ENCODE measurements at regions of chr9 and their contacts with region 1.

Region 1: DNA sequence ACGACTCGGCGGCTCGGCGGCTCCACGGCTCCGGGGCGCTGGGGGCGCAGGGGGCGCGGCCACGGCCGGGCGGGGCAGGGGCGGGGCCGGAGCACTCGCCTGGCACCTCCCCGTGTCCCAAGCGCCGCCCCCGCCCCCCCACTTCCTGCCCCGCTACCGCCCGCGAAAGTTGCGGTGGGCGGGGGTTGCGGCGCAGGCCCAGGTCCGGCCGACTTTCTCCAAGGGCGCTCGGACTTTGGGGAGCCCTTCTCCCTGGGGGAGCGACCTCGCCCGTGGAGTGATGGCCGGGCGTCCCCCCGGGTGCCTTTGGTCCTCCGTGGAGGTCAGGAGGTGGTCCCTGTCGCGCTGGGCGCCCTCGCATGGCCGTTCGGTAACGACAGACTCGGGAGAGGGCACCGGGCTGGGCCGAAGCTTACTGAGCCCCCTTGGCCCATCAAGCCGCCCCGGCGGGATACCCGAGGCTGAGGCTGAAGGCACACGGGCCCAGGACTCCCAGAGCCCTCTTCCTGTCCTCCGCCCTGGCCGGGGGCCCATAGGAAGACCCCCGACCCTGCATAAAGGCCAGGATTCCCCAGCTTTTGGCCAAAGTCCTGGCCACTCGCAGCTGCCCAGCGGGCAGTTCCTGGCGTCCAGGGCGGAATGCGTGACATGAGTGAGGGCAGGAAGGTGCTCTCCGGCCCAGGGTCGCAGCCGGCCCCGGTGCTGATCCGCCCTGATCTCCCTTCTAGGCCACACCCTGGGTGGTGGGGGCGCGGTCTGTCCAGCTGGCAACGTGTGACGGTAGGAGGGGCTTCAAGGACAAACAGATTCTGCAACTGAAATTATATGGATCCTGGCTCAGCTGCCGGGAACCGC is 883 bp upstream of the VAV2 start:
- DNase-seq: peak; percentile 39 to 84
- H3K4me3 ChIP-seq: peak overlapping the region; percentile 40 to 93 (median 67)
- H3K27ac ChIP-seq: peak overlapping the region; percentile 54; the same call in 1 of the 2 replicates
- H3K4me1 ChIP-seq: peaks cover 0 to 20% (median 11%) of the 10 kb centered on the region in 4 experiments; a peak in 5 of 7 replicates
- H3K27me3 ChIP-seq: no peaks in the 10 kb centered on the region
- CTCF ChIP-seq: peak in 2 of 3 experiments; percentile 12 to 22; a peak in 2 of 4 replicates
- EP300 ChIP-seq: no peak
- POLR2A ChIP-seq: no peak
- RAD21 ChIP-seq: 0 out of 4 replicates have a peak, but pooled peaks of 1 of the 2 experiments have one; percentile 10

Region 2: GRCh38 chr9:133768859-133769425 is 224.1 kb before region 1 on chr9:
- CTCF ChIA-PET with region 1: interaction called, 30 read pairs
- POLR2A ChIA-PET with region 1: no interaction called
- DNase-seq: peak in 1 of 2 experiments; percentile 63
- H3K4me3 ChIP-seq: no peak overlapping the region
- H3K27ac ChIP-seq: no peak overlapping the region
- H3K4me1 ChIP-seq: no peaks in the 10 kb centered on the region
- H3K27me3 ChIP-seq: no peaks in the 10 kb centered on the region
- CTCF ChIP-seq: peak; percentile 49 to 67 (median 65)
- EP300 ChIP-seq: no peak
- POLR2A ChIP-seq: no peak
- RAD21 ChIP-seq: peak; percentile 58 to 62

Region 3: DNA sequence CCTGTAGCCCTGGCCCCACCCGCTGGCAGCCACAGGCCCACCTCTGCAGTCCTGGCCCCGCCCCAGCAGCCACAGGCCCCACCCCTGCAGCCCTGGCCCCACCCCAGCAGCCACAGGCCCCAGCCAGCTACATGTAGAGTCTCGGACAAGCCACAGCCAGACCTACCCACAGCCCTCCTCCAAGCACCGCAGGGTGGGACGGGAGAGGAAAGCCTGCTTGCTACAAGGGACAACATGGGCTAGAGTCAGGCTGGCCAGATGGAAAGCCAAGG is 205.3 kb before region 1 on chr9:
- CTCF ChIA-PET with region 1: interaction called, 75 read pairs
- POLR2A ChIA-PET with region 1: no interaction called
- DNase-seq: peak in 1 of 2 experiments; percentile 73
- H3K4me3 ChIP-seq: no peak overlapping the region
- H3K27ac ChIP-seq: no peak overlapping the region
- H3K4me1 ChIP-seq: peaks cover 0 to 3% (median 1%) of the 10 kb centered on the region in 4 experiments; a peak in 4 of 7 replicates
- H3K27me3 ChIP-seq: no peaks in the 10 kb centered on the region
- CTCF ChIP-seq: no peak
- EP300 ChIP-seq: no peak
- POLR2A ChIP-seq: no peak
- RAD21 ChIP-seq: no peak

Region 4: GRCh38 chr9:133813749-133814585 is 179.0 kb before region 1 on chr9:
- CTCF ChIA-PET with region 1: interaction called, 12 read pairs
- POLR2A ChIA-PET with region 1: no interaction called
- DNase-seq: no peak
- H3K4me3 ChIP-seq: no peak overlapping the region
- H3K27ac ChIP-seq: no peak overlapping the region
- H3K4me1 ChIP-seq: no peaks in the 10 kb centered on the region
- H3K27me3 ChIP-seq: no peaks in the 10 kb centered on the region
- CTCF ChIP-seq: no peak
- EP300 ChIP-seq: no peak
- POLR2A ChIP-seq: no peak
- RAD21 ChIP-seq: no peak

Region 5: DNA sequence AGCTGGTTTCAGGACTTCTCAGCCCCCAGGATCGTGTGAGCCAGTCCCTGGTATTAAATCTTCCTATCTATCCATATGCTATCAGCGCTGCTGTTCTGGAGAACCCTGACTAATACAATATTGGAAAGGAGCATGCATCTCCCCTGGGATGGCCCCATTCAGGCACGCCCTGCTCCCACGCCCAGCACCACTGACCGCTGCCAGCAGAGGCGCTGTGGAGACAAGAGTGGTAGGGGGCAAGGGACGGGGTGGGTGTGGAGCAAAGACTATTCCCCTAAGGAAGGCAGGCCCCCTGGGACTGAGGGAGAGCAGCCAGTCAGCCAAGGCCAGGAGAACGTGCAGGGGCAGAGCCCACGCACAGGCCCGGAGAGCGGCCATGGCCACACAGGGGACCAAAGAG is 116.9 kb before region 1 on chr9:
- CTCF ChIA-PET with region 1: interaction called, 17 read pairs
- POLR2A ChIA-PET with region 1: no interaction called
- DNase-seq: peak in 1 of 2 experiments; percentile 97
- H3K4me3 ChIP-seq: no peak overlapping the region
- H3K27ac ChIP-seq: no peak overlapping the region
- H3K4me1 ChIP-seq: peaks cover 0 to 10% (median 2%) of the 10 kb centered on the region in 4 experiments; a peak in 5 of 7 replicates
- H3K27me3 ChIP-seq: no peaks in the 10 kb centered on the region
- CTCF ChIP-seq: peak in 2 of 3 experiments; percentile 80 to 86; a peak in 3 of 4 replicates
- EP300 ChIP-seq: no peak
- POLR2A ChIP-seq: no peak
- RAD21 ChIP-seq: peak; percentile 54 to 71

Region 6: DNA sequence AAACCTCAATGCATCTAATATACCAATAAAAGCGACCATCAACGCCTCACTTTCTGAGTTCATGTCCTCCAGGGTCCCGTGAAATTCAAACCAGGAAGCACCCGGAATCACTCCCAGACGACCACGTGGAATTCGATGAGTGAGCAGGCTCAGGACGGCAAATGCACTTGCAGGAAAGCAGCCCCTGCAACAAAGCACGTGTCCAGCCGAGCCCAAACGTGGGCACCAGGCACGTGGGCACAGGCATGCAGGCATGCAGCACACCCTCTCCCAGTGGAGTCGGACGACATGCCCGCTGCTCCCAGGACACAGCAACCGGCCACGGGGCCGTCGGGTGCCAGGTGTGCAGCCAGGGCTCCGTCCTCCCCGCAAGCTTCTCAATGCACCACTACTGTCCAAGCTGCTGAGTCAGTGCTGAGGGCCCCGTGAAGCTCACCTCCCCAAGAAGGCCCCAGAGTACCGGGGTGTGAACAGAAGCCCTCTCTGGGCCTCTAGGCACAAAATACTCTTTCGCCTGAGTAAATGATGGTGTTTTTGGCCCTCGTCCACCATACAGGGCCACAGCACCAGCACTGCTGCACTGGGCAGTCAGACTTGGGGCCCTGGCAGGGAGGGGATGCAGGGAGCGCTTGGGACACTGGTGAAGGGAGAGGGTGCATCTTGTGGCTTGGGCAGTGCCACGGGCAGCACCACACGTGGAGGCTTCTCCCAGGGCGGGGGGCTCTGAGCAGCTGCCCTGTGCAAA is 88.5 kb before region 1 on chr9:
- CTCF ChIA-PET with region 1: no interaction called
- POLR2A ChIA-PET with region 1: no interaction called
- DNase-seq: no peak
- H3K4me3 ChIP-seq: no peak overlapping the region
- H3K27ac ChIP-seq: no peak overlapping the region
- H3K4me1 ChIP-seq: no peaks in the 10 kb centered on the region; a peak in 2 of 7 replicates
- H3K27me3 ChIP-seq: no peaks in the 10 kb centered on the region
- CTCF ChIP-seq: no peak
- EP300 ChIP-seq: no peak
- POLR2A ChIP-seq: no peak
- RAD21 ChIP-seq: no peak

Region 7: GRCh38 chr9:133955821-133956411 is 37.1 kb before region 1 on chr9:
- CTCF ChIA-PET with region 1: interaction called, 21 read pairs
- POLR2A ChIA-PET with region 1: interaction called, 3 read pairs
- DNase-seq: peak in 1 of 2 experiments; percentile 77
- H3K4me3 ChIP-seq: peak overlapping the region in 3 of 4 experiments; percentile 21 to 45 (median 24); a peak in 4 of 8 replicates
- H3K27ac ChIP-seq: peak overlapping the region; percentile 82; the same call in 1 of the 2 replicates
- H3K4me1 ChIP-seq: peaks cover 14 to 47% (median 42%) of the 10 kb centered on the region in 4 experiments
- H3K27me3 ChIP-seq: no peaks in the 10 kb centered on the region
- CTCF ChIP-seq: peak in 1 of 3 experiments; percentile 5; a peak in 1 of 4 replicates
- EP300 ChIP-seq: peak in 1 of 2 experiments; percentile 18; a peak in 1 of 3 replicates
- POLR2A ChIP-seq: peak in 1 of 2 experiments; percentile 27; a peak in 1 of 3 replicates
- RAD21 ChIP-seq: peak; percentile 2 to 18; a peak in 1 of 4 replicates

Region 8: DNA sequence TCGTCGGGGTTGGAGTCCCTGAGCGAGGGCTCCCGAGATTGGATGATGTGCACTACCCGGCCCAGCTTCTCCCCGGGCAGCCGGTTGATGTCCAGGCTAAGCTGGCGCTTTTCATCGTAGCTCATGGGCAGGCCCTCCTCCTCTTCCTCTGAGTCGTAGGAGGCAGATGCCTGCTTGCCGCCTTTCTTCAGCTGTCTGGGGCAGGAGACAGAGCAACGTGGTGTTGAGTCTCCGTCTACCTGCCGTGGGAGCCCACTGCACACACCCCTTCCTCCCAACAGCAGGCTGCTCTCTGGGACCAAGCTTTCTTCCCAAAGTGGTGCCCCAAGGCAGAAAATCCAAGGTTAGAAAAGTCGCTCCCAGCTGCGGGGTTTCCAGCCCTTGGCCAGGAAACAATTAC is 43.1 kb after region 1 on chr9:
- CTCF ChIA-PET with region 1: no interaction called
- POLR2A ChIA-PET with region 1: no interaction called
- DNase-seq: no peak
- H3K4me3 ChIP-seq: no peak overlapping the region
- H3K27ac ChIP-seq: no peak overlapping the region
- H3K4me1 ChIP-seq: no peaks in the 10 kb centered on the region
- H3K27me3 ChIP-seq: no peaks in the 10 kb centered on the region
- CTCF ChIP-seq: no peak
- EP300 ChIP-seq: no peak
- POLR2A ChIP-seq: no peak
- RAD21 ChIP-seq: no peak

Region 9: DNA sequence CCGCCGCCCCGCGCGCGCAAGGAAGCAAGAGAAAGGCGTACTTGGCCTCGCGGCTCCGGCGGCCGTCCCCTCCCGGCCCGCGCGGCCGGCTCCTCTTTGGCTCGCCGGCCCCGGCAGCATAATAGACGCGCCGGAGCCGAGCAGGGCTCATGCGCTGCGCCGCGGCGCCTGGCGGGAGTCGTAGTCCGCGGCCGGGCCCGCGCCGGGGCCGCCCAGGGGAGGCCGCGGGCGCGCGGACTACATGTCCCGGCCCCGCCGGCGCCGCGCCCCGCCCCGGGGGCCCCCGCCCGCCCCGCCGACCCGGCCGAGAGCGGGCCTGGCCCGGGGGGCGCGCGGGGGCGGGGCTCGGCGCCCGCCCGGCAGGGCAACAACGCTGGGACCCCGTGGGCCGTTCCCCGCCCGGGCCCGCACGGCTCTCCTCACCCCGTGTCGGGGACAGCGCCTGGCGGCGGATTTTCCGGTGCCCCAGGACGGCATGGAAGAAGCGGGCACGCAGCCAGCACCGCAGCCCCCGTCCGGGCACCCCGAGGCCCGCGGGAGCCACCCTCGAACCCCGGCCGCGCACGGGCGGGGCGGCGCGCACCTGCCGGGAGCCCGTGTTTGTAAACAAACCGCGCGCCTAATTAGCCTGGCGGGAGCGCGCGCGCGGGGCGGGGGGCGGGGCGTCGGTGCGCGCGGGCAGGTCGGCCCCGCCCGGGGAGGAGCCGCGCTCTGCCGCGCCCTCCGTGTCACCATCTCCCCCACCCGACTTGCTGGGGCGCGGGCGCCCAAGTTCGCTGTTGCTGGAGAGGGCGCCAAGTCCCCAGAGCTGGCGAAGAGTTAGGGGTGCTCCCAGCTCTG is 75.1 kb after region 1 on chr9 and contains the start of gene BRD3:
- CTCF ChIA-PET with region 1: no interaction called
- POLR2A ChIA-PET with region 1: no interaction called
- DNase-seq: peak; percentile 53 to 87
- H3K4me3 ChIP-seq: peak within 1 kb of the TSS; percentile 52 to 100 (median 92)
- H3K27ac ChIP-seq: peak within 1 kb of the TSS; percentile 77
- H3K4me1 ChIP-seq: peaks cover 0 to 9% (median 7%) of the 10 kb centered on the region in 4 experiments; a peak in 5 of 7 replicates
- H3K27me3 ChIP-seq: peaks cover 0 to 13% (median 10%) of the 10 kb centered on the region in 4 experiments; a peak in 3 of 7 replicates
- CTCF ChIP-seq: no peak
- EP300 ChIP-seq: no peak
- POLR2A ChIP-seq: peak in 1 of 2 experiments; percentile 82; a peak in 2 of 3 replicates
- RAD21 ChIP-seq: peak in 1 of 2 experiments; percentile 25; a peak in 2 of 4 replicates
- total RNA-seq, gene BRD3: 82.7 and 87.8 TPM in 2 replicates

Region 10: DNA sequence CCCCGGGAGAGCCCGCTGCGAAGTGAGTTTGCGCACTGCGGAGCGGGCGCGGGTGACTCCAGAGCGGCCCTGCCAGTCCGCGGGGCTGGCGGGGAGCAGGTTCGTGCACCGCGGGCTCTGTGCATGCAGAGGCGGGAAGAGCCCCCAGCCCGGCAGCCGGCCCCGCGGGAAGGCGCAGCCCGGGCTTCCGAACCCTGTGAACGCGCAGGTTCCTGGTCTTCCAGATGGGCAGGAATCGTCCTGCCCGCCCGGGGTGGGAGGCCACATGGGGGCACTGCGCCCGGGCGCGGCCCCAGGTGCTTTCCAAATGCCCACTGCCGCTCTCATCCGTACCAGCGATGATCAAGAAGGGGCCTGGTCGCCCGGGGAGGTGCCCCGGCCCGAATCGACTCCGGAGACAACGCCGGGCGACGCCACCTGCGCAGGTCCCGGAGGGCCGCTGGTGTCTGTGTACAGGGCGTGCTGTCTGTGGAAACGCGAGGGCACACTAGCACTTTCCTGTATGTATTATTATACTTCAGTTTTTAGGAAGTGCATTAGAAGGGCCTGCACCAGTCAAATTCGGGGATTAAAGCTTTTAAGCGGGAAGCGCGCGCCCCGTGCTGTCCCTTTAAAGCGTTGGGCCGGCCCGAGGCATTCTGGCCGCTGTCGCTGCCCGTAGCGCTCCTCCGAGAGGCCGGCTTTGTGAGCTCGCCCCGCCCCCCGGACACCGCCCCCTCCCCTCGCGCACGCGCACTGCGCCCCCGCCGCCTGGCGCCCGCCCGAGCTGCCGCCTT is 142.5 kb after region 1 on chr9 and contains the start of gene WDR5:
- CTCF ChIA-PET with region 1: no interaction called
- POLR2A ChIA-PET with region 1: no interaction called
- DNase-seq: peak; percentile 43 to 93
- H3K4me3 ChIP-seq: peak within 1 kb of the TSS; percentile 77 to 95 (median 88)
- H3K27ac ChIP-seq: peak within 1 kb of the TSS; percentile 88
- H3K4me1 ChIP-seq: peaks cover 8 to 30% (median 20%) of the 10 kb centered on the region in 4 experiments
- H3K27me3 ChIP-seq: no peaks in the 10 kb centered on the region
- CTCF ChIP-seq: no peak
- EP300 ChIP-seq: no peak
- POLR2A ChIP-seq: peak in 1 of 2 experiments; percentile 22; a peak in 1 of 3 replicates
- RAD21 ChIP-seq: no peak
- total RNA-seq, gene WDR5: 68.1 and 69.7 TPM in 2 replicates

Measured in H1 (cell line).